Tibial artery (tissue), 4 donors: ENCODE measurements at regions of chr19 and their contacts with region 1.

Region 1: GRCh38 chr19:4400135-4400936 is at the start of gene SH3GL1:
- DNase-seq: peak; percentile 88 to 97
- H3K4me3 ChIP-seq: peak within 1 kb of the TSS; percentile 87 to 98
- H3K27ac ChIP-seq: peak within 1 kb of the TSS; percentile 90 to 98
- H3K4me1 ChIP-seq: peaks cover 6 to 52% (median 38%) of the 10 kb centered on the region in 4 donors
- H3K27me3 ChIP-seq: no peaks in the 10 kb centered on the region
- CTCF ChIP-seq: peak; percentile 90 to 99

Region 2: GRCh38 chr19:4267101-4267900 is 133.0 kb before region 1 on chr19:
- intact Hi-C with region 1: loop called (anchors 10 kb)
- DNase-seq: peak in 1 of 2 donors; percentile 34
- H3K4me3 ChIP-seq: no peak overlapping the region
- H3K27ac ChIP-seq: no peak overlapping the region
- H3K4me1 ChIP-seq: no peaks in the 10 kb centered on the region
- H3K27me3 ChIP-seq: no peaks in the 10 kb centered on the region
- CTCF ChIP-seq: peak; percentile 66 to 76

Region 3: GRCh38 chr19:4342615-4343369 is 57.5 kb before region 1 on chr19:
- intact Hi-C with region 1: loop called (anchors 5 kb)
- DNase-seq: peak; percentile 98 to 99
- H3K4me3 ChIP-seq: peak overlapping the region; percentile 70 to 74
- H3K27ac ChIP-seq: peak overlapping the region; percentile 90 to 91
- H3K4me1 ChIP-seq: peaks cover 0 to 22% (median 14%) of the 10 kb centered on the region in 4 donors
- H3K27me3 ChIP-seq: peaks cover 0 to 4% of the 10 kb centered on the region in 2 donors
- CTCF ChIP-seq: peak in 1 of 2 experiments; percentile 62

Region 4: DNA sequence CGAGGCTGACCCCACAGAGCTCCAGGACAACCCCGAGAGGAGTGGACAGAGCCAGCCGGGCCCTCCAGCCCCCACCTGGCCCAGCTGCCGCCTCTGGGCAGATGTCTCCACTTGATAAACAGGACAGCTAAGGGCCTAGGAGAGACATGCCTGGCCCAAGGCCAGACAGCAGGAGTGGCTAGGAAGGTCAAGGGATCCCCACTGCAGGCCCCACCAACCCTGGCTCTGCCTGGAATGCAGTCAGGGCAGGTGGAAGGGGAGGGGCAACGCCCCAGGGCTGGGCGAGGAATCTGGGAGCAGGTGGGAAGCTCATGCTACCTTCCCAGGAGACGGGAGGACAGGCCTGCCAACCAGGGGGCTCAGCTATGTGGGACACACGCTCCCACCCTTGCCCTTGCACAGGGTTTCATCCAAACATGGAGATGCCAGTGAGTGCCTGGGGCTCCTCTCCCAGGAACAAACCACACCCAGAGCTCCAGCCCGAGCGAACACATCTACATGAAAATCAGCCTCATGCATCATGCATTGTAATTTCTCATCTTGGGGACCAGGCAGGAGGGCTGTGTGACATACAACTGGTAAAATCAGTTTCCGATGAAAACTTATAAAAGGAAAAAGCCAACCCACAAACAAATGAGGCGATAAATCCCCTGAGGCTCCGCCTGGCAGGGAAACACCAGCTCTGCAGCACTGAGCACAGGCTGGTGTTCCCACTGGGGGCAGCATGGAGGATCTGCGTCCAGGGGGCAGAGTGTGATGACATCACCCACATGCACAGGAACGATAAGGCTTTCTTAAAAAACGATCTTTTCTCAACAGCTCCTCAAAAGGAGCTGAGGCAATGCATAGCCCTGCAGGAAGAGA is 24.9 kb before region 1 on chr19:
- intact Hi-C with region 1: loop called (anchors 2 kb)
- DNase-seq: peak; percentile 48 to 89
- H3K4me3 ChIP-seq: peak overlapping the region in 1 of 2 donors; percentile 0
- H3K27ac ChIP-seq: peak overlapping the region; percentile 84 to 97
- H3K4me1 ChIP-seq: peaks cover 23 to 94% (median 79%) of the 10 kb centered on the region in 4 donors
- H3K27me3 ChIP-seq: no peaks in the 10 kb centered on the region
- CTCF ChIP-seq: peak; percentile 26 to 41